ENCODE measurements at regions of chr19 and their contacts with region 1.

Region 1: GRCh38 chr19:12484371-12485051 is at the start of gene ZNF709:
- DNase-seq: peak; percentile 90
- ATAC-seq: peak; percentile 98
- H3K4me3 Mint-ChIP-seq: peak within 1 kb of the TSS; percentile 96
- H3K27ac Mint-ChIP-seq: peak within 1 kb of the TSS; percentile 88
- H3K4me1 Mint-ChIP-seq: peaks cover 35% of the 10 kb centered on the region
- H3K27me3 Mint-ChIP-seq: no peaks in the 10 kb centered on the region
- CTCF ChIP-seq: no peak
- total RNA-seq, gene ZNF709: 4.8 and 6.4 TPM in 2 replicates

Region 2: DNA sequence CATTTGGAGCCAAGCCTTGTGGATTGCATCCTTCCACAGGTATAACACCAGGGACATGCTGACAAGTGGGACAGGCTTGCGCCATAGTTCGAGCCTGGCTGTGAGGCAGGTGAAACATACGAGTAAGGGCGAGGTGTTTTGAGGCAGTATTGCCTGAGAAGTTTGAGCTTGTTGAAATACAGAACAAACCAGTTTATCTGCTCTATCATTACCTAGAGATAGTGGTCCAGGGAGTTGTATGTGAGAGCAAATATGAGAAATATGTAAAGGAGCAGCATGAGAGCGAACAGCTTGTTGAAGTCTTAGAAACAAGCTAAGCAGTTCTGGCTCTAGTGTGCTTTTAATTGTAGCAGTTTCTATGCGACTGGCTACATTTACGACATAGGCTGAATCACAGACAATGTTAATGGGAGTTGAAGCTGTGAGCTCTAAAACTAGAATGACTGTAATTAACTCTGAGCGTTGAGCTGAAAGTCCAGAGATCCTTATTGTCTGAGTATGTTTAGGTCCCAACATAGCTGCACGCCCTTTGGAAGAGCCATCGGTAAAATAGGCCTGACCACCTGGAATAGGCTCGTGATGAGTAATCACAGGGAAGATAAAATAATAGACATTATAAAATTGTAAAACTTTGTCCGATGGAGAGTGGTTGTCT is 627.8 kb before region 1 on chr19:
- CTCF ChIA-PET with region 1: no interaction called
- POLR2A ChIA-PET with region 1: no interaction called
- intact Hi-C with region 1: no loop called
- DNase-seq: no peak
- ATAC-seq: no peak
- H3K4me3 Mint-ChIP-seq: no peak overlapping the region
- H3K27ac Mint-ChIP-seq: no peak overlapping the region
- H3K4me1 Mint-ChIP-seq: peaks cover 4% of the 10 kb centered on the region
- H3K27me3 Mint-ChIP-seq: no peaks in the 10 kb centered on the region
- CTCF ChIP-seq: no peak

Region 3: GRCh38 chr19:12237143-12237839 is 247.2 kb before region 1 on chr19:
- CTCF ChIA-PET with region 1: no interaction called
- POLR2A ChIA-PET with region 1: no interaction called
- intact Hi-C with region 1: no loop called
- DNase-seq: no peak
- ATAC-seq: no peak
- H3K4me3 Mint-ChIP-seq: no peak overlapping the region
- H3K27ac Mint-ChIP-seq: no peak overlapping the region
- H3K4me1 Mint-ChIP-seq: no peaks in the 10 kb centered on the region
- H3K27me3 Mint-ChIP-seq: no peaks in the 10 kb centered on the region
- CTCF ChIP-seq: no peak

Region 4: DNA sequence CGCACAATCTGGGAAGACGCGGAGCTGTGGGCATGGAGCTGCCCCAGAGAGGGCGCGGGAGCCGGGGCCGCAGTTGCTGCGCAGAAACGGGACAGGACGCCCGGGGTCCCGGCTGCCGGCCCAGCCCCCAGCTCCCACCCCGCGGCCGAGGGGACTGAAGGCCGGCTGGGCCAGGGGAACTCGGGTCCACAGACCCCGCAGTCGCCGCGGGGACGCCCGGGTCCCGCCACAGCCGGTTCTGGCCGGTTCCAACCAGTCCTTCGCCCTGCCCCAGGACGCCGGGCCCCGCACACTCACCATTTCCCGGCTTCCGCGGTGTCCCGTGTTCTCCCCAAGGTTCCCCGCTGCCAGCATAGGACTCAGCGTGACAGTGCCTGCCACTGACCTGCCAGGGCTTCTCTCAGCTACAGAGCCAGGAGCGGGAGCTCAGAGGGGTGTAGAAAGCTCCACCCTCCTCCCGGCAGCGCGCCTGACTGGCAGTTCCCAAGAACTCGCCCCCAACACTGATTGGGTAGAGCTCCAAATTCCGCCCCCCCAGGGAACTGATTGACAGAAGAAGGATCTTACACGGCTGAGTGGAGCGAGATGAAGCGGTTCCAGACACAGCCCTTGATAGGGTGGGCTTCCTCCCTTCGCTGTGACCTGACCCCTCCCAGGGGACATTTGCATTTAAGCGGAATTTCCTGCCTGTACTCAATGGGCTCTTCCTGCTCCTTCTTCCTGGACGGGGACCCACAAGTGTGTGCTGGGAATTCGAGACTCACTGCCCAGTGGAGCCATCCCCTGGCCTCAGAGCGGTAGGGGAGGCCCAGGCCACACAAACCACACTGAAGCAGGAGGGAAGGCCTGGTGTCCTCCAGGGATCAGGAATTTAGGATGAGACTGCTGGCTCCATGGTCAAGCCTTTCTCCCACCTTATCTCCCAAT is 119.0 kb before region 1 on chr19 and contains the start of gene ZNF442:
- CTCF ChIA-PET with region 1: no interaction called
- POLR2A ChIA-PET with region 1: interaction called, 10 read pairs
- intact Hi-C with region 1: no loop called
- DNase-seq: peak; percentile 68
- ATAC-seq: peak; percentile 97
- H3K4me3 Mint-ChIP-seq: peak within 1 kb of the TSS; percentile 96
- H3K27ac Mint-ChIP-seq: peak within 1 kb of the TSS; percentile 91
- H3K4me1 Mint-ChIP-seq: peaks cover 25% of the 10 kb centered on the region
- H3K27me3 Mint-ChIP-seq: no peaks in the 10 kb centered on the region
- CTCF ChIP-seq: no peak
- total RNA-seq, gene ZNF442: 6.9 and 8.7 TPM in 2 replicates

Region 5: DNA sequence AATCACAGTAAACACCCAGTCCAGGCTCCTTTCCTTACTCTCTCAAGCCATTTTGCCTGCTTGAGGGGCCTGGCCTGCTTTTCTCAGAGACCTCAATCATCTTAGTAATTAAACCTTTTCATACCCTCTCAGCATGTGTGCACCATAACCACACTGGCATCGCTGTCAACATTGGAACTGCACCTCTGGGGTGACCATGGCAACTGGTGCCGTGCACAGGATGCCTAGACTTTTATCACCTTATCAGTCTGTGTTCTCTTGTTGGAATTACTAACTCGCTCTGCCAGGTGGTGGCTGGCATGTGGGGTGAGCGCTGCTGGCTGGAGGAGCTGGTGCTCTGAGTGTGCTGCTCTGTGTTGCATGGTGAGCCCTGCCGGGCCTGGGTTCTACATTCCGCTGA is 17.6 kb after region 1 on chr19:
- CTCF ChIA-PET with region 1: no interaction called
- POLR2A ChIA-PET with region 1: no interaction called
- intact Hi-C with region 1: no loop called
- DNase-seq: no peak
- ATAC-seq: no peak
- H3K4me3 Mint-ChIP-seq: no peak overlapping the region
- H3K27ac Mint-ChIP-seq: no peak overlapping the region
- H3K4me1 Mint-ChIP-seq: no peaks in the 10 kb centered on the region
- H3K27me3 Mint-ChIP-seq: no peaks in the 10 kb centered on the region
- CTCF ChIP-seq: no peak

Region 6: DNA sequence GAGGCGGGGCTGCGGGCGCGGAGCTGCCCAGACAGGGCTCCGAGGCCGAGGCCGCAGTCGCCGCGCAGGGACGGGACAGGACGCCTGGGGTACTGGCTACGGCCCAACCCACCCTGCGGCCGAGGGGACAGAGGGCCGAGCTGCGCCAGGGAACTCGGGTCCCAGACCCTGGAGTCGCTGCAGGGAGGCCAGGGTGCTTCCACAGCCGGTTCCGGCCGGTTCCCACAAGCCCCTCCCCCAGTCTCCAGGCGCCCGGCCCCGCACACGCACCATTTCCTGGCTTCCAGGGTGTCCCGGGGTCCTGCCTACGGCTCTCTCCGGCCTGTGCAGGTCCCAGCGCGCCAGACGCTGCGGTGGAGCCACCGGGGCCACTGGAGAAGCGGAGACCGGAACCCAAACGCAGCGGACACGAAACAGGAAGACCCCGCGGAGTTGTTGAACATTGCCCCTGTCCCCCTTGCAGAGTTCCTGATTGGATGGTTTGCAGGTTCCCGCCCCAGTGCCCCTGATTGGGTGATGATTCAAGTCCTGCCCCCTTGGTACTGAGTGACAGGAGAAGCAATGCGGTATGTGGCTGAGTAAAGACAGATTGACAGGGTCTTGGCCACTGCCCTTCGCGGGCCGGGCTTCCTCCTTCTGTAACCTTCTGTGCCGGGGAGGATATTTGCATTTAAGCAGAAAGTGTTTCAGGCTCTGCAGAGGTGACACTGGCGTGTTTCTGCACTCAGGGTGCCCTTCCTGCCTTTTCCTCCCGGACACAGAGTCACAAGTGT is 66.7 kb after region 1 on chr19 and contains the start of gene ZNF564:
- CTCF ChIA-PET with region 1: no interaction called
- POLR2A ChIA-PET with region 1: interaction called, 3 read pairs
- intact Hi-C with region 1: loop called (anchors 2 kb)
- DNase-seq: peak; percentile 81
- ATAC-seq: peak; percentile 98
- H3K4me3 Mint-ChIP-seq: peak within 1 kb of the TSS; percentile 98
- H3K27ac Mint-ChIP-seq: peak within 1 kb of the TSS; percentile 94
- H3K4me1 Mint-ChIP-seq: peaks cover 48% of the 10 kb centered on the region
- H3K27me3 Mint-ChIP-seq: no peaks in the 10 kb centered on the region
- CTCF ChIP-seq: no peak
- total RNA-seq, gene ZNF564: 23.0 and 26.6 TPM in 2 replicates